Activated CD4-positive, alpha-beta T cell treated with anti-CD3 and anti-CD28 coated beads for 36 hours (primary cell): ENCODE measurements at regions of chr3 and their contacts with region 1.

Region 1: DNA sequence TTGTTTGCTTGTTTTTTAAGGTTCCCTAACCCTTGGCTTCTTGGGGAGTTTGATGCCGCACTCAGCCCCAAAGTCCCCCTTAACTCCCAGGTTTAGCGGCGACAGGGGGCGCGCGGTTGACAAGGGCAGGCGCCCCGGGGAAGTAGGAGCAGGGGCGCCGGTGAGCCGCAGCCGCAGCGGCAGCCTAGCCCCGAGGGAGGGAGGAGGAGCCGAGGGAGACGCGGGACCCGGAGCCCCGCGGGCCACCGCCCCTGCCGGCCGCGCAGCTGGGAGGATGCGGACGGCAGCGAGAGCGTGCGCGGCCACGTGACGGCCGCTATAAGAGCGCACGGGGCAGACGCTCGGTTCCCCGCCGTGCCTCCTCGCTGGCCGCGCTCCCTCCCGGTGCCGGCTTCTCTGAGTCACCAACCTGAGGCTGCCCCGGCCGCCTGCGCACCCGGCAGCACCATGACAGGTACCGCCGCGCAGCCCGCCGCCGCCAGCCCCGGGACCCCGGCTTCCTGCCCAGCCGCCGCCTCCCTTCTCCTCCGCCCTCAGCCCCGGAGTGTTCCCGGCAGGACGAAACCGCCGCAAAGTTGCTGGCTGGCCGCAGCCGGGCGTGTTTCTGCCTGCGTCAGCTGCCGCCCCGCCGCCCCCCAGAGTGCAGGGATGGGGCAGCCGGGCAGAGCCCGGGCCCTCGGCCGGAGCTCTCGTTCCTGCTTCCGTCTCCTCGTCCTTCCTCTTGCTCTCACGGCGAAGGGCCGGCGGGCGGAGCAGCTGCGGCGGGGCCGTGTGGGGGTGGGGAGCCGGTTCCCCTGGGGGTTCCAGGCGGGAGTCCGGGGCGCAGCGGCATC is at the start of gene GYG1:
- DNase-seq: peak; percentile 85
- ATAC-seq: peak; percentile 91
- H3K4me3 Mint-ChIP-seq: peak within 1 kb of the TSS; percentile 76
- H3K27ac Mint-ChIP-seq: peak within 1 kb of the TSS; percentile 83
- H3K4me1 Mint-ChIP-seq: peaks cover 20% of the 10 kb centered on the region
- H3K27me3 Mint-ChIP-seq: no peaks in the 10 kb centered on the region
- total RNA-seq, gene GYG1: 13.3 to 14.0 TPM

Region 2: DNA sequence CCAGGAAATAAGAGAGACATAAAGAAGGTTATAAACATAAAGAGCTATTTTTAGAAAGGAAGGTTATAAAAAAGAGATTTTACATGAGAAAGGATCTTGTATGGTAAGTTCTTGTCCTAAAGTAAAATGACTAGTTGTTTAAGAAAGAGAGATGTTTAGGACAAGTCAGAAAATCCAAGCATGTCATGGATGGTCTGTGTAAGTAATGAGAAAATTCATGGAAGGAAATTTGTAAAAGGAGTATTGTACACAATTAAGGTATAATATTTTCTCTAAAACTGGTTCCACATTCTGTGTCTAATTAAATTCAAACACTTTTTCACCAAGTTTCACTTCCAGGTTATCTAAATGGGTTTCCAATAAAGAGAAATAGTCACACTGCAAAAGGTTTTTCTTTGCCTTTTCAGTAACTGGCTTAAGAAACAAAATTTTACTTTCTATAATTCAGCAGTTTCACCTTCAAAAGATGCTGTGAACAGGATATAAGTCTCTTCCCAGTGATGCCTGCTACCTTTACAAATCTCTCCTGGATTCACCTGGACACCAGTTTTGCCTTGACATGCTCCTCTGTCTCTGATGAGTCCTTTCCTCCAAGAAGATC is 1126.6 kb before region 1 on chr3:
- CTCF ChIA-PET with region 1: no interaction called
- POLR2A ChIA-PET with region 1: no interaction called
- intact Hi-C with region 1: no loop called
- DNase-seq: no peak
- ATAC-seq: no peak
- H3K4me3 Mint-ChIP-seq: no peak overlapping the region
- H3K27ac Mint-ChIP-seq: no peak overlapping the region
- H3K4me1 Mint-ChIP-seq: no peaks in the 10 kb centered on the region
- H3K27me3 Mint-ChIP-seq: no peaks in the 10 kb centered on the region

Region 3: DNA sequence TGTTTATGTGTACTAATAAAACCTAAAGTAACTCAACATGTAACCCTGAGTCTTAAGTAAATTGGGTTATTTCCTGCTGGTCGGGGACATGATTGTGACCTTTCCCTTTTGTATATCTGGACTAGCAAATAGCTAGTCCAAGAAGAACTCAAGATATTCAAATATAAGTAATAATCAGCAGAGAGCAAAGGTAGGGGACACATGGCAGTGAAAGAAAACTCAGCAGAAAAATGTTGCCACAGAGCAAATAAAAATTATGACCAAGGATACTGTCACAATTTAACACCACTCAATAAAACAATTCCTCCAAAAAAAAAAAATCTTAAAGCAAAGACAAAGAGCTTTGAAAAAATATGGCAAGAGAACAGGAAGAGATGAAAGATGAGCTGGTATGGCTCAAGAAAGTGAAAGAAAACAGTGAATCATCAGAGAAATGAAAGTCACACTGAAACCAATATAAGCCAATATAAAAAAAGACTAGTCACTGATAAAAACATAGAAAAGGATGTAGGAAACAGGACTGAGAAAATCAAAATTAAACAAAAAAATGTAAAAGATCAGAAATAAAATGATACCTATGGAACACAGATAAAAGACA is 51.5 kb after region 1 on chr3:
- CTCF ChIA-PET with region 1: interaction called, 4 read pairs
- POLR2A ChIA-PET with region 1: no interaction called
- intact Hi-C with region 1: loop called (anchors 1 to 5 kb)
- DNase-seq: no peak
- ATAC-seq: peak; percentile 92
- H3K4me3 Mint-ChIP-seq: no peak overlapping the region
- H3K27ac Mint-ChIP-seq: peak overlapping the region; percentile 64
- H3K4me1 Mint-ChIP-seq: peaks cover 20% of the 10 kb centered on the region
- H3K27me3 Mint-ChIP-seq: no peaks in the 10 kb centered on the region

Region 4: GRCh38 chr3:149086232-149086988 is 95.0 kb after region 1 on chr3 and contains the start of gene HLTF:
- CTCF ChIA-PET with region 1: no interaction called
- POLR2A ChIA-PET with region 1: no interaction called
- intact Hi-C with region 1: loop called (anchors 2 kb)
- DNase-seq: peak; percentile 93
- ATAC-seq: peak; percentile 100
- H3K4me3 Mint-ChIP-seq: peak within 1 kb of the TSS; percentile 92
- H3K27ac Mint-ChIP-seq: peak within 1 kb of the TSS; percentile 80
- H3K4me1 Mint-ChIP-seq: peaks cover 18% of the 10 kb centered on the region
- H3K27me3 Mint-ChIP-seq: no peaks in the 10 kb centered on the region
- total RNA-seq, gene HLTF: 19.0 to 20.5 TPM

Region 5: DNA sequence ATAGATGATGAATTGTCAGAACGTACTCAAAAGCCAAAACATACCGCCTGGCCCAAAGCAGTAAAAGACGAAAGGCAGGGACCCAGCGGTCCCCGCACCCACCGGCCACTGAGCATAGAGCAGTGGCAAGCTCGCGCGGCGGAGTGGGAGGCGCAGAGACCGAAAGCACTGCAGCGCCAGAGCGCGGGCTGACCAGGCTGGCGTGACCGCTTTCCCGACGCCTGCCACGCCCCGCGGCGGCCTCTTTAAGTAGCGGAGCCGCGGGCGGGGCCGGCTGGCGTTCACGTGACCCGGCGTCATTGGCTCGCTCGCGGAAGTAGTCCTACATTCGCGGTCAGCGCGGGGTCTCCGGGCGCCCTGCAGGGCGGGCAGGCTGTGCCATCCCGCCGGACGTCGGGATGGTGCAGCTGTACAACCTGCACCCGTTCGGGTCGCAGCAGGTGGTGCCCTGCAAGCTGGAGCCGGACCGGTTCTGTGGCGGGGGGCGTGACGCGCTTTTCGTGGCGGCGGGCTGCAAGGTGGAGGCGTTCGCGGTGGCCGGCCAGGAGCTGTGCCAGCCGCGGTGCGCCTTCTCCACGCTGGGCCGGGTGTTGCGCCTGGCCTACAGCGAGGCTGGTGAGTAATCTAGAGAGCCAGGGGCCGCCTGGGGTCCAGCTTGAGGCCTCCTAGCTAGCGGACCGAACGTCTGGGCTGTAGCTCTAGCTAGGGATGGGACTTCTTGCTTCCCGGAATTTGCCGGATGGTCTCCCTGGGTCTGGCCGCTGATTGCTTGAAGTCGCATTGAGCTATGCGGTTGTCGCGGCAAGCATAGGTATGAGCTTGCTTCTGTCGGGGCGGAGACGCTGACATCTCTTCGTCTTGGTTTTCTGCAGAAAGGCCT is 138.2 kb after region 1 on chr3 and contains the start of gene HPS3:
- CTCF ChIA-PET with region 1: interaction called, 4 read pairs
- POLR2A ChIA-PET with region 1: no interaction called
- intact Hi-C with region 1: loop called (anchors 1 kb)
- DNase-seq: peak; percentile 90
- ATAC-seq: peak; percentile 91
- H3K4me3 Mint-ChIP-seq: peak within 1 kb of the TSS; percentile 90
- H3K27ac Mint-ChIP-seq: peak within 1 kb of the TSS; percentile 82
- H3K4me1 Mint-ChIP-seq: peaks cover 37% of the 10 kb centered on the region
- H3K27me3 Mint-ChIP-seq: peaks cover 8% of the 10 kb centered on the region
- total RNA-seq, gene HPS3: 18.0 to 20.2 TPM